GM12878 (cell line): ENCODE measurements at regions of chr19 and their contacts with region 1.

Region 1: DNA sequence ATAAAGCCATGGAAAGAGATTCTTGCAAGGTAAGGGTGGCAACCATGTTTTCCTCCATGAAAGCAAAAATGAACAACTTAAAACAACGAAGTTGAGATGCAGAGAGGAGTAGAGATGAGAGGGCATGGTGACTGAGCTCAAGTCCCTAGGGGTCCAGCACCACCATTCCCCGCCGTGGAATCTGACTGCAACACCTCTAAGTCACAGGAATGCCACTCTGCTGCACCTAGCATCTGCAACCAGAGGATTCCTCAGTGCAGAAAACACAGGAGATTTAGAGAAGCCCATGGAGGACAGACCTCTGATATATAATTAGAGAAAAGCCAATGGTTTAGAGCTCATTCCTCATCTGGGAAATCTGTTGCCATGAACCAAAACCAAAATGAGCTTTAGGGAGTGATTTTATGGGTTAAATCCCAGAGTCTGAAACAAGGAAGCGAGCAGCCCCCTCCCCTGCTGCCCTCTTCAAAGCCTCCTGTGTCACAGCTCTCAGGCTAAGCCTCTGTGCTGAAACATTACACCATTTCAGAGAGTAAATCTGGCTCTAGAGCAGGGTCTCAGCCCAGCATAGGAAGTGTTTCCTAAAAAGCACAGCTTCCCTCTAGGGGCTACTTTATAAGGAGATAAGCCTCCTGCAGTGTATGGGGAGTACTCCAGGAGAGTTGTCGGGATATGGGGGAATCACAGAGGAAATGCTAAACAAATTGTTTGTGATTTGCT is 1043.6 kb downstream of the UQCRFS1 start:
- DNase-seq: no peak
- ATAC-seq: no peak
- H3K4me3 ChIP-seq: no peak overlapping the region
- H3K27ac ChIP-seq: no peak overlapping the region
- H3K4me1 ChIP-seq: no peaks in the 10 kb centered on the region
- H3K27me3 ChIP-seq: no peaks in the 10 kb centered on the region
- CTCF ChIP-seq: no peak
- EP300 ChIP-seq: no peak
- POLR2A ChIP-seq: no peak
- RAD21 ChIP-seq: no peak

Region 2: DNA sequence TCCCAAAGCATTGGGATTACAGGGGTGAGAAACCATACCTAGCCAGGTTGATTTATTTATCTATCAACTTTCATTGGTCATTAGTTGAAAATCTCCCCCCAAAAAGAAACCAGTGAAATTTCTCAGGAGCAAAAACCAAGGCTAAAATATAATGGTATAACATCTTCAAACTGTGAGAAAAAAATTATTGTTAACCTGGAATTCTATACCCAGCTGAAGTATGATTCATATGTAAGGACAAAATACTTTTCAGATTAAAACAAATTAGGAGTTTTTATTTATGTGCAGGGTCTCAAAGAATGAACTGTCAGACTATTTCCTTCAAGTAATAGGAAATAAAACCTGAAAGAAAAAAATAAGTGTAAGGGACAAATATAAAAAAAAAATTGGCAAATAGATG is 10.3 kb before region 1 on chr19:
- CTCF ChIA-PET with region 1: interaction called, 4 read pairs
- POLR2A ChIA-PET with region 1: no interaction called
- RAD21 ChIA-PET with region 1: no interaction called
- SMC1A ChIA-PET with region 1: interaction called, 10 read pairs
- in situ Hi-C with region 1: no loop called
- intact Hi-C with region 1: no loop called
- DNase-seq: no peak
- ATAC-seq: no peak
- H3K4me3 ChIP-seq: no peak overlapping the region
- H3K27ac ChIP-seq: no peak overlapping the region
- H3K4me1 ChIP-seq: no peaks in the 10 kb centered on the region
- H3K27me3 ChIP-seq: no peaks in the 10 kb centered on the region
- CTCF ChIP-seq: no peak
- EP300 ChIP-seq: no peak
- POLR2A ChIP-seq: no peak
- RAD21 ChIP-seq: no peak